Right lobe of liver (tissue), 6 donors: ENCODE measurements at regions of chr9 and their contacts with region 1.

Region 1: DNA sequence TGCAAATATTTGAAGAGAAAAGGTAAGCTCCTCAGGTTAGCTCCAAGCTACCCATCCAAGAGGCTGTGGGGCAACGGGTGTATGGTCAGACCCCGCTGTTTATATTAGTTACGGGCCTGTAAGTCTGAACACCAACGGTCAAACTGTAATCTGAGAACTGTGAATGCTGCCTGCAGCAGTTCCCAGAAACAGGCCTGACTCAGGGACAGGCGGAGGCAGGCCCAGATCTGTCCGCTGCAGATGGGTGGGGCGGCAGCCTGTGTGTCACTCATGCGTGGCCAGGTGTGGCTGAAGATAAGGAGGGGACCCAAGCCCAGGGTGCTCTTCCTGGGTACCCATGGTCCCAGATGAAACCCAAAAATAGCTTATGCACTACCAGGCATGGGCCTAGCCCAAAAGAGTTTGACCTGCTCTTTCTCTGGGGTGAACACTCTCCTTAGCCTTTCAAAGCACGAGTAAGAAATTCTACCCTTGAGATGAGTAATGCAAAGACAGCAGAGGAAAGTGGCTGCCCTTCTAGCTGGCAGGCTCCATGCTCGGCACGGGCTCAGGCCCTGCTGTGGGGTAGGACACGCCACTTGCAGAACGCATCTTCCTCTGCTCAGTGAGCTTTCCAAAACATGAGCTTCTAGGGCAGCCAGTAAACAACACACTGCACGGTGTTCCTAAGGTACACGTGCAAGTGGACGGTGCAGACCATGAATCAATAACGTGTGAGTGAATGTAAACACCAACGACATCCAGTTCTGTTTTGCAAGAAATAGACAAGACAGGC is 9.1 kb downstream of the UBAC1 start:
- DNase-seq: no peak
- ATAC-seq: peak; percentile 62 to 91 (median 84)
- H3K4me3 ChIP-seq: no peak overlapping the region
- H3K27ac ChIP-seq: peak overlapping the region in 1 of 3 donors; percentile 17
- H3K4me1 ChIP-seq: peaks cover 0 to 13% (median 0%) of the 10 kb centered on the region in 4 donors
- H3K27me3 ChIP-seq: no peaks in the 10 kb centered on the region
- CTCF ChIP-seq: no peak
- POLR2A ChIP-seq: no peak

Region 2: GRCh38 chr9:135907431-135908092 is 44.5 kb before region 1 on chr9 and contains the start of gene CAMSAP1:
- intact Hi-C with region 1: loop called in 1 of 2 experiments (anchors 10 kb)
- DNase-seq: peak; percentile 94 to 96 (median 95)
- ATAC-seq: peak; percentile 91 to 96 (median 94)
- H3K4me3 ChIP-seq: peak within 1 kb of the TSS; percentile 83 to 89 (median 84)
- H3K27ac ChIP-seq: peak within 1 kb of the TSS; percentile 26 to 47 (median 47)
- H3K4me1 ChIP-seq: peaks cover 0 to 25% (median 8%) of the 10 kb centered on the region in 4 donors
- H3K27me3 ChIP-seq: no peaks in the 10 kb centered on the region
- CTCF ChIP-seq: no peak
- POLR2A ChIP-seq: peak; percentile 62
- total RNA-seq, gene CAMSAP1: 5.2 to 16.1 (median 10.4) TPM